ENCODE measurements at regions of chr17 and their contacts with region 1.

Region 1: GRCh38 chr17:75034236-75034908 is 12.4 kb downstream of the ATP5PD start:
- DNase-seq: peak; percentile 96
- H3K4me3 ChIP-seq: peak overlapping the region; percentile 85
- H3K27ac ChIP-seq: peak overlapping the region; percentile 98
- H3K4me1 ChIP-seq: peaks cover 18% of the 10 kb centered on the region
- H3K27me3 ChIP-seq: no peaks in the 10 kb centered on the region
- CTCF ChIP-seq: 0 out of 2 replicates have a peak, but pooled peaks have one; percentile 23

Region 2: GRCh38 chr17:75205037-75205792 is 170.8 kb after region 1 on chr17 and contains the start of gene NUP85:
- CTCF ChIA-PET with region 1: interaction called, 3 read pairs
- POLR2A ChIA-PET with region 1: no interaction called
- intact Hi-C with region 1: loop called (anchors 10 kb)
- DNase-seq: peak; percentile 98
- H3K4me3 ChIP-seq: peak within 1 kb of the TSS; percentile 76
- H3K27ac ChIP-seq: peak within 1 kb of the TSS; percentile 100
- H3K4me1 ChIP-seq: peaks cover 4% of the 10 kb centered on the region
- H3K27me3 ChIP-seq: no peaks in the 10 kb centered on the region
- CTCF ChIP-seq: no peak
- total RNA-seq, gene NUP85: 140 and 156 TPM in 2 replicates

Region 3: DNA sequence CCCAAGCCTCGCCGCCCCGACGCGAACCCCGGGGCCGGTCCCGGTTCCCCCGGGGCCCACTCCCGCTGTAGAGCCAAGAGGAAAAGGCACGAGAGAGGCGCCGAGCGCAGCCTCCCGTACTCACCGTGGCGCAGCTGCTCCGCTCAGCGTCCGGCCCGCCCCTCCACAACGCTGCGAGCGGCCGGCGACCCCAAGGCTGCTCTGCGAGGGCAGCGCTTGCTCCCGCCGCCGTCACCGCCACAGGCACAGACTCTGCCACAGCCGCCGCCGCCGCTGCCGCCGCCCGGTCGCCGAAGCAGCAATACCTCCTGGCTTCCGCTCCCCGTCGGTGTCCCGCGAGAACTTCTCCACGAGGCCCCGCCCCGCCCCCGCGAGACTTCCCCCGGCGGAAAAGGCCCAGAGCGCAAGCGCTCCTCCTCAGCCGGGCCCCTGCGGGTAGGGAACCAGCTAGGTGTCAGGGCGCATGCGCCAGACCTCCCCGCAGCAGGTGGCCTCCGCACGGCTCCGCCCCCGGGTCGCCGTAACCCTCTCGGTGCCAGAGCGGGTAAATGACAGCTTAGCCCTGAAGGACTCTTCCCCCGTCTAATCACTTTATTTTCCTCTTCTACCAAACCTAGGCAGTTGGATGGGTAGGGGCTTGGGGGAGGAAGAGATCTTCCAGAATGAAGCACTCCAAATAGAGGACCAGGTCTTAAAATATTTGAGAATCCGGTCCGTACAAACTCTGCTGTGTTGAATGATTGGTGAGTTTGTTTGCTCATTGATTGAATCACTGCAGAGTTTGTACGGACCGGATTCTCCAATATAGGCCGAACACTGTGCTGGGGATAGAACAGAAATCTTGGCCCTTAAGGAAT is 371.2 kb after region 1 on chr17 and contains the start of gene GRB2:
- CTCF ChIA-PET with region 1: no interaction called
- POLR2A ChIA-PET with region 1: no interaction called
- intact Hi-C with region 1: loop called (anchors 10 kb)
- DNase-seq: peak; percentile 99
- H3K4me3 ChIP-seq: peak within 1 kb of the TSS; percentile 99
- H3K27ac ChIP-seq: peak within 1 kb of the TSS; percentile 90
- H3K4me1 ChIP-seq: no peaks in the 10 kb centered on the region
- H3K27me3 ChIP-seq: no peaks in the 10 kb centered on the region
- CTCF ChIP-seq: no peak
- total RNA-seq, gene GRB2: 95.2 and 101 TPM in 2 replicates